Left cardiac atrium (tissue), 4 donors: ENCODE measurements at regions of chr17 and their contacts with region 1.

Region 1: DNA sequence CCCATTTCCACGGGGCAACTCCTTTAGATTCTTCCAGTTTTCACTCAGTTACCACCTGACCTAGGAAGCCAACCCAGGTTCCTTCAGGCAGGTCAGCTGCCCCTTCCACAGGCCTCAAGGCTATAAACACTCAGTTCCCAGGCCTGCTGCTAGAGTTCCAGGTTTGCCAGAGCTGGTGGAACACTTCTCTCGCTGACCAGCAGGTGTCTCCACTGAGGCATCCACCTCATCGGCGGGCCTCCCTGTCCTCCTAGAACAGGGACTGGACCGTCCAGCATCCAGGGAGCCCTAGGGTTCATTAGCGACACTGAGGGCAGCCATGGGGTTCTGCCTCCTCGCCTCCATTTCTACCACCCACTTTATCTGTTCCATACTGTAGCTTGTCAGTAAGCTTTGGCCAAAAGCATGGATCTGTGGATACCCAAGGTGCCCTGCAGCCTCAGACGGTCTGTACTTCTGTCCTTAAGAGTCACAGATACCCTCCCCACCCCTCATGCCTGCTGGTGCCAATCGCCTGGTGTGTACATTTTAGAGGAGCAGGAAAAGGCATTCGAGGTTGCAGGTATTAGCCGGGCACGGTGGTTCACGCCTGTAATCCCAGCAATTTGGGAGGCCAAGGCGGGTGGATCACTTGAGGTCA is 29.0 kb downstream of the PIMREG start:
- DNase-seq: peak; percentile 77
- ATAC-seq: peak; percentile 67 to 81

Region 2: GRCh38 chr17:6555331-6556120 is 82.3 kb after region 1 on chr17:
- intact Hi-C with region 1: loop called (anchors 5 to 10 kb)
- DNase-seq: no peak
- ATAC-seq: peak; percentile 52 to 59

Region 3: DNA sequence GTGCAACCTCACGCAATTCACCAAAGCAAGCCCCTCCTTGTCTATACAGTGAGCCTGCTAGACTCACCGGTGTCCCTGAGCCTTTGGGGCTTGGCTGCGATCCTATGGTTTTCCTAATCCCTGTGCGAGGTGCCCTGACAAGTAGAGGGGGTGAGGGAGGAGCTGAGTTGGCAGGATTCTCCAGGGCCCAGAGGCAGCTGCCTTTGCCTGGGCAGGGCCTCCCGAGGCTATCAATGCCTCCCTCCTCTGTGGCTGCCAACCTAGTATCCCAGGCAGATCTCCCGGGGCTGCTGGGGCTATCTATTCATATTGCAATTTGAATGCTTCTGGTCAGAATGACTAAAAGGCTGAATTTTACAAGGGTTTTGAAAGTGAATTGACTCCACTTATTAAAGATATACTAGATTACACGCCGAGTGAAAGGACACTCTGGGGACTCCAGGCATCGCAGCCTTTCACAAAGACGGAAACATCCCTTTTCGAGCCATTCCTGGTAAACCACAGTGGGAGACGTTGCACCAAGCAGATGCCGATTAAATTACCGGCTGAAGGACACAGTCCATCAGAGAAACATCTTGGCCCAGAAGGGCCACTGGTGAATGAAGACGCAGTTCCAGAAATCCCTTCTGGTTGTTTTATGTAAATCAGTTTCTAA is 94.4 kb after region 1 on chr17:
- intact Hi-C with region 1: loop called in 1 of 2 experiments (anchors 10 kb)
- DNase-seq: no peak
- ATAC-seq: peak; percentile 44 to 74